ENCODE measurements at regions of chr10 and their contacts with region 1.

Region 1: DNA sequence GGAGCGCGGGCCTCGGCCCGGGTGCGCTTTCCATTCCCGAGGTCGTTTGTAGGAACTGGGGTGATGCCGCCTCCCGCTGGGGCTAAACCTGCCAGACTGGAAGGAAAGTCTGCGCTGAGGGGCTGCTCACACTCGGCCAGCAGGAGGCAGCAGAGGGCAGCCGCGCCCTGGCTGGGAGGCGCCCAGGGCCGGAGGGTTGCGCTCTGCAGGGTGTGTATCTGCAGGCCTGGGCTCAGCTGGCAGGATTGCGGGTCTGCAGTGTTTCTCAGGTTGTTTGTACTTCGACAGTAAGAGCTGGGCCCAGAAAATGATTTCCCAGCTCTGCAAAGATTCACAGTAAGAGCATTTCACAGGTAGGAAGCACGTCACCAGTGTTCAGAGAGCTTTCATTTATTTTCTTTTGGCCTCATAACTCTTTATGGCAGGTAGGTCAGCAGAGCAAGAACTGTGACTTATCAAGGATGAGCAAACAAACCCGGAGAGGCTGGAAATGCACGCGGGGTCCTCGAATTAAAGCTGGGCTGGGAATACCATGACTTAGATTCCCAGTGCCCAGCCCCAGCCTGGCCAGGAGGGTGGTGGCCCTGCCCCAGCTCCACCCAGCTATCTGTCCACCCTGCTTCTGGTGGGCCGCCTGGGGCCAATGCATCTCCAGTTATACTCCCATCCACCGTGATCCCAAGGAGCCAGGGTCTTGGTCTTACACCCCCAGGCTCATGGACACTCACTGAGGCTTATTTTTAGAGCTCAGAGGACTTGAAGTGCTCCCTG is 15.2 kb upstream of the PPP2R2D start:
- DNase-seq: peak; percentile 53
- H3K27ac ChIP-seq: no peak overlapping the region
- CTCF ChIP-seq: peak; percentile 68

Region 2: DNA sequence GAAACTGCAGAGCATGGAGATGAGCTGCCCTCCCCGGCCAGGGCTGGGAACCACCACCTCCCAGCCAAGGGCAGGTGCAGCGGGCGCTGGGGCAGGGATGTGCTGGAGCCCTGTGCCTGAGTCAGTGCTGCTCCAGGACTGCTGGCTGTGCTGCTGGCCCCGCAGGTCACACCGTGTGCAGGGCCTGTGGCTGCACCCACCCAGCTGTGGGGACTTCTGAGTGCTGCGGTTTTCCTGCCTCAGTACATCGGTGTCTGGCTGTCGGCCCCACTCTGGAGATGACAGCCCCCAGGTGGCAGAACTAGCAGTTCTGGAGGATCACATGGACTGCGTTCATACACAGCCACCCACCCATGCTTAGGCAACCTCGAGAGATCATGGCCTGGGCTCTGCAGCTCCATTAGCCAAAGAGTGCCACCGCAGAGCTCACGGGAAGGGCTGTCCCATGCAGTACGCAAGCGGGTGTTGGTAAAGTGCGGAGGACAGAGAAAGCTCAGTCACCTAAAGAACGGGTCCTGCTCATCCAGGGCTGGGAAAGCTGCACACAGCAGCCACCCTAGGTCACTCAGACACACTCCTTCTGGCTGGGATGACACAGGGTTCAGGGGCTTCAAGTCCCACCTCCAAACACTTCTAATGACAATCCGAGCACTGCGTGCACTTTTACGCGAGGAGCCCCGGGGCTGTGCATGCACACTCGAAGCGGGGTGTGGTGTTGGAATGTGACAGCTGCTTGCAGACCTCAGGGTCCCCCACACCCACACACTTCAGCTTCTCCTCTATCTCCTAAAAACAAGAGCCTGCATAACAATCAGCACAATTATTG is 182.8 kb before region 1 on chr10:
- CTCF ChIA-PET with region 1: no interaction called
- POLR2A ChIA-PET with region 1: no interaction called
- DNase-seq: no peak
- H3K27ac ChIP-seq: no peak overlapping the region
- CTCF ChIP-seq: no peak

Region 3: DNA sequence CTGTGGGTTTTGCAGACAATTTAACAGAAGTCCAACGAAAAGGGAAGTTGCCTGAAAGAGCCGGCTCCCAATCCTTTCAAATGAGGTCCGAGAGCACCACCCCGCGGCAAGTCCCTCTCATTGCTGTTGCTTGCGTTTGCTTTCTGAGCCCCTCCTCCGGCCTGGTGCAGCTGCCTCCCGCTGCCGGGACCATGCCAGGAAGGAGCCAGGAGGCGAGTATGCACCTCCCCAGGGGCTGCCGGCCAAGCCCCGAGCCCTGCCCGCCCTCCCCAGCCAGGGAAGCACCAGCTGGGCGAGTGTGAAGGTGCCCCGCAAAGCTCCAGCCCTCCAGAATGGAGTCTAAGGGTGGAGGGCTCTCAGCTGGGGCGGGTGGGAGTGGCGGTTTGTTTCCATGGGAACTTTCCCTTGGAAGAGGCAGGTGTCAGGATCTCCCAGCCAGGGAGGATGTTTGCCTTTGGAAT is 10.6 kb before region 1 on chr10:
- CTCF ChIA-PET with region 1: interaction called, 12 read pairs
- POLR2A ChIA-PET with region 1: no interaction called
- DNase-seq: peak; percentile 85
- H3K27ac ChIP-seq: no peak overlapping the region
- CTCF ChIP-seq: peak; percentile 76

Region 4: DNA sequence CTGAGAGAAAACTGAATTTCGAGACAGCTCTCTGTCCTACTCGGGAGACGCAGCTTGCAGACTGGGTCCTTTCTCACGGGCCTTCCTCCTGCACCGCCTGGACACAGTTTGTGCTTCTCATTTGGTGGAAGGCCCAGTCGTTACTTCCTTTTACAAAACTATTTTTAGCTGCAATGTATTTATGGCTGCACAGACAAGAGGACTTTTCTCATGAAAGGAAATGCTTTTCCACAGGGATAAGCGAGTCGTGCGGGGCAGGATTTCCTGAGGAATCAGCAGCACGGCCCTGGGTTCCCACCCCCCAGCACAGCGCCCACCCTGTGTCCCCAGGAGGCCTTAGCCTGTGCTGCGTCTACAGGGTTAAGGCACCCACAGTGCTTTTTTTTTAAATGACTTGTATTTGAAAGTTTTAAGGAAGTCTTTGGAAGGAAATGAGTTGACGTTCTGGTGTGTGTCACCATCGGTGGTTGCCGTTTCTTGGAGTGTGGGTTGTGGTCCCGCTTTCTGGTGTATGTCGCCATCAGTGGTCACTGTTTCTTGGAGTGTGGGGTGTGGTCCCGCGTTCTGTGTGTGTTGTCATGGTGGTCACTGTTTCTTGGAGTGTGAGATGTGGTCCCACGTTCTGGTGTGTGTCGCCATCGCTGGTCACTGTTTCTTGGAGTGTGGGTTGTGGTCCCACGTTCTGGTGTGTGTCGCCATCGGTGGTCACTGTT is 702.9 kb after region 1 on chr10:
- CTCF ChIA-PET with region 1: interaction called, 10 read pairs
- POLR2A ChIA-PET with region 1: no interaction called
- DNase-seq: no peak
- H3K27ac ChIP-seq: no peak overlapping the region
- CTCF ChIP-seq: no peak

Measured in RWPE1 (cell line).